HCT116 (cell line): ENCODE measurements at regions of chr1 and their contacts with region 1.

Region 1: GRCh38 chr1:39189592-39190041 is 14.9 kb upstream of the MACF1 start:
- DNase-seq: no peak
- ATAC-seq: no peak
- H3K4me3 ChIP-seq: no peak overlapping the region
- H3K27ac ChIP-seq: no peak overlapping the region
- H3K4me1 ChIP-seq: peaks cover 65 to 75% of the 10 kb centered on the region in 2 experiments
- H3K27me3 ChIP-seq: no peaks in the 10 kb centered on the region
- CTCF ChIP-seq: no peak
- POLR2A ChIP-seq: no peak
- RAD21 ChIP-seq: no peak

Region 2: GRCh38 chr1:37479255-37480124 is 1710.1 kb before region 1 on chr1:
- CTCF ChIA-PET with region 1: no interaction called
- POLR2A ChIA-PET with region 1: no interaction called
- RAD21 ChIA-PET with region 1: no interaction called
- intact Hi-C with region 1: no loop called
- DNase-seq: peak; percentile 67
- ATAC-seq: peak; percentile 72
- H3K4me3 ChIP-seq: peak overlapping the region; percentile 40 to 49
- H3K27ac ChIP-seq: peak overlapping the region; percentile 91
- H3K4me1 ChIP-seq: peaks cover 49 to 65% of the 10 kb centered on the region in 2 experiments
- H3K27me3 ChIP-seq: no peaks in the 10 kb centered on the region
- CTCF ChIP-seq: no peak
- POLR2A ChIP-seq: no peak
- RAD21 ChIP-seq: no peak

Region 3: DNA sequence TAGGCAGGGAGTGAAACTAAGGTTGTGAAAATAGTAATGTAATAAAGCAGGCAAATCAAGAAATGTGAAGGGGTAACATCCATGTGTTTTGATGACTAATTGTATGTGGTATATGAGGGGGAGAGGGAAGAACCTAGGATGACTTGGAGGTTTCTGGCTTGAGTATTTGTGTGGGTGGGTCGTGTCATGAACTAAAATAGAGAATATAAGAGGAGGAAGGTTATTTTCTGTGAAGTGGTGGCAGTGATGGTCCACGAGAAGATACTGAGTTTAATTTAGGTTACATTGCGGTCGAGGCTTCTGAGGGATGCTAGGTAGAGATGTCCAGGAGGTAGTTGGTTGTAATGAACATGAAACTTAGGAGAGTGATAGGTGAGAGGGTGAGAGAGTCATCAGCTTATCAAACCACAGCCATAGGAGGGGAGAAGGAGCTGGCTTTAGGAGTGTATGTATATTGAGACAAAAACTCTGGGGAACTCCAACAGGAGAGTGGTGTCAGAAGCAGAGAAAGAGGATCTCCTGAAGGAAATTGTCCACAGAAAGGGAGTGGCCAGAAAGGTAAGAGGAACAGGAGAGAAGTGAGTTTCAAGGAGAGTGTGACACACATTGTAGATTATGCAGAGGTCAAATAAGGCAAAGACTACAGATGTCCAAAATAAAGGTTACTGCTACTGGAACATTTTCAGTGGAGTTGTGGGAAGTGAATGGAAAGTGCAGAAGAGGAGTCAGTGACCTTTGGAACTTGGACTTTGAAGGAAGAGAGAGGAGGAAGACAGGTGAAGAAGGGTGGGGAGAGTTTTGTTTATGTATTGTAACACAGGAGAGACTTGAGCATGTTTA is 74.1 kb before region 1 on chr1:
- CTCF ChIA-PET with region 1: interaction called, 9 read pairs
- POLR2A ChIA-PET with region 1: interaction called, 8 read pairs
- RAD21 ChIA-PET with region 1: no interaction called
- intact Hi-C with region 1: loop called (anchors 5 kb)
- DNase-seq: no peak
- ATAC-seq: no peak
- H3K4me3 ChIP-seq: peak overlapping the region in 1 of 2 experiments; percentile 9; a peak in 1 of 4 replicates
- H3K27ac ChIP-seq: no peak overlapping the region
- H3K4me1 ChIP-seq: peaks cover 54 to 55% of the 10 kb centered on the region in 2 experiments
- H3K27me3 ChIP-seq: no peaks in the 10 kb centered on the region
- CTCF ChIP-seq: no peak
- POLR2A ChIP-seq: no peak
- RAD21 ChIP-seq: no peak

Region 4: GRCh38 chr1:39258146-39258924 is 68.7 kb after region 1 on chr1:
- CTCF ChIA-PET with region 1: interaction called, 51 read pairs
- POLR2A ChIA-PET with region 1: interaction called, 4 read pairs
- RAD21 ChIA-PET with region 1: interaction called, 7 to 11 read pairs
- intact Hi-C with region 1: loop called (anchors 1 kb)
- DNase-seq: peak; percentile 55
- ATAC-seq: peak; percentile 90
- H3K4me3 ChIP-seq: no peak overlapping the region
- H3K27ac ChIP-seq: no peak overlapping the region
- H3K4me1 ChIP-seq: peaks cover 0 to 3% of the 10 kb centered on the region in 2 experiments; a peak in 1 of 4 replicates
- H3K27me3 ChIP-seq: no peaks in the 10 kb centered on the region
- CTCF ChIP-seq: peak; percentile 84 to 92 (median 92)
- POLR2A ChIP-seq: no peak
- RAD21 ChIP-seq: peak; percentile 98

Region 5: GRCh38 chr1:39509360-39510009 is 319.9 kb after region 1 on chr1:
- CTCF ChIA-PET with region 1: no interaction called
- POLR2A ChIA-PET with region 1: no interaction called
- RAD21 ChIA-PET with region 1: no interaction called
- intact Hi-C with region 1: no loop called
- DNase-seq: no peak
- ATAC-seq: no peak
- H3K4me3 ChIP-seq: no peak overlapping the region
- H3K27ac ChIP-seq: no peak overlapping the region
- H3K4me1 ChIP-seq: no peaks in the 10 kb centered on the region
- H3K27me3 ChIP-seq: no peaks in the 10 kb centered on the region
- CTCF ChIP-seq: no peak
- POLR2A ChIP-seq: no peak
- RAD21 ChIP-seq: no peak